Activated CD4-positive, alpha-beta T cell treated with anti-CD3 and anti-CD28 coated beads for 36 hours (primary cell): ENCODE measurements at regions of chr1 and their contacts with region 1.

Region 1: GRCh38 chr1:28751315-28752060 is 14.7 kb downstream of the YTHDF2 start:
- DNase-seq: no peak
- ATAC-seq: no peak
- H3K4me3 Mint-ChIP-seq: no peak overlapping the region
- H3K27ac Mint-ChIP-seq: no peak overlapping the region
- H3K4me1 Mint-ChIP-seq: peaks cover 55% of the 10 kb centered on the region
- H3K27me3 Mint-ChIP-seq: no peaks in the 10 kb centered on the region

Region 2: DNA sequence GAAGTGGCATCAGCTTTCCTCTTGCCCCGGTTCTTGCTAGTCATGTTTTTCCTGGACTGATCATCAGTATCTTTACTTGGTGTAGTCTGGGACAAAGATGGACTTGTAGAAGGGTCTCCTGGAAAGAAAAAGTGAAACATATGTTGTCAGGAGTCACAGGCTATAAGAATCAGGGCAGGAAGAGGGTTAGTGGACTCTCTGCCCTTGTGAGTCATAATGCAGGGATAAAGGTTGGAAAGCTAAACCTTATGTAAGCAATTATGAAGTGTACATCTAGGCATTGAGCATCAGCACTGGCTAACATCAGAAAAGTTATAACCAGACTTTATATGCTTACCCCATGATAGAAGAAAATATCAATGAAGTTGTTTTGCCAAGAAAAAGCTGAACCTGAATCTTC is 740.5 kb before region 1 on chr1:
- CTCF ChIA-PET with region 1: no interaction called
- POLR2A ChIA-PET with region 1: interaction called, 10 read pairs
- intact Hi-C with region 1: no loop called
- DNase-seq: no peak
- ATAC-seq: no peak
- H3K4me3 Mint-ChIP-seq: no peak overlapping the region
- H3K27ac Mint-ChIP-seq: no peak overlapping the region
- H3K4me1 Mint-ChIP-seq: no peaks in the 10 kb centered on the region
- H3K27me3 Mint-ChIP-seq: no peaks in the 10 kb centered on the region

Region 3: DNA sequence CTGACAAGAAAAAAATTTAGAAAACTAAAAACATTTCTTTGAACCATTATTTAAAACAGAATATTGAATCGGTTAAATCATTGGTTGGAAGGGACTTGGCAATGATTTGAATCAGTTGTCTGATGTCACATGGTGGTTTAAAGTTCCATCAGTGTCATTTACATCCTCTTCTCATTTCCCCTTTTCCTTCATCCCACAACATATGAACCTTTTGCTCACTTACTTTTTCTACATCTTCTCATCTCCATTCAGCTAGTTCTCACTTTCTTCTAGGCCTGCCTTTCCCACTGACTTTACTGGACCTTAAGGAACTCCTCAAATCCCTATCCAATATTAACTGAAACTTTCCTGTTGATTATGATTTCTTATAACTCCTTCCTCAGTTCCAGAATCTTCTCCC is 323.5 kb before region 1 on chr1:
- CTCF ChIA-PET with region 1: no interaction called
- POLR2A ChIA-PET with region 1: no interaction called
- intact Hi-C with region 1: no loop called
- DNase-seq: no peak
- ATAC-seq: no peak
- H3K4me3 Mint-ChIP-seq: no peak overlapping the region
- H3K27ac Mint-ChIP-seq: no peak overlapping the region
- H3K4me1 Mint-ChIP-seq: peaks cover 5% of the 10 kb centered on the region
- H3K27me3 Mint-ChIP-seq: no peaks in the 10 kb centered on the region